Activated naive CD4-positive, alpha-beta T cell treated with anti-CD3 and anti-CD28 coated beads for 36 hours (primary cell): ENCODE measurements at regions of chr14 and their contacts with region 1.

Region 1: DNA sequence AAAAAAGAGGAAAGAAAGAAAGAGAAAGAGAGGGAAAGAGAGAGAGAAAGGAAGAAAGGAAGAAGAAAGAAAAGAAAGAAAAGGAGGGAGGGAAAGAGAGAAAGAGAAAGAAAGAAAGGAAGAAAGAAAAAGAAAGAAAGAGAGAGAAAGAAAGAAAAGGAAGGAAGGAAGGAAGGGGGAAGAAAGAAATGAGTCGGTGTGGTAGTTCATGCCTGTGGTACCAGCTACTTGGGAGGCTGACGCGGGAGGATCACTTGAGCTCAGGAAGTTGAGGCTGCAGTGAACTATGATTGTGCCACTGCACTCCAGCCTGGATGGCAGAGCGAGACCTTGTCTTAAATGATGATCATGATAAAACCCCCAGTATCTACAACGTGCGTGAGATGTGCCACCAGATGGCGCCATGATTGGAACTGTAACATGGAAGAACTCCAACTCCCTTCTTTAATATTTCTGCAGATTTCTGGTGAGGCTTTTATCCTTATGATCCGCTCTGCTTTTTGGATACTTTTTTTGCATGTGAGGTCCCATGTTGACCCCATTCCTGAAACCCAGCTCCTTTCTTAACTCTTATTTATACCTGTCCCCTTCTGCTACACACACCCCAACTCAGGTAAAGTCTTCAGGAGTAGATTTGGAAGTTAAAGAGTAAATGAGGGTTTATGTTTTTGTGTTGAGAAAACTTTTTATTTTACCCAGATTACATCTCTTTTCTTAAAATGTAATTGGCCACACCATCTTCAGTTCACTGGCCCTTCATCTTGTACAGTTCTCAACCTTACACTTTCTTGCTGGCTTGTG is 25.6 kb downstream of the RNASE10 start:
- DNase-seq: peak; percentile 85
- H3K4me3 Mint-ChIP-seq: peak overlapping the region; percentile 59
- H3K27ac Mint-ChIP-seq: no peak overlapping the region
- H3K4me1 Mint-ChIP-seq: peaks cover 11% of the 10 kb centered on the region
- H3K27me3 Mint-ChIP-seq: no peaks in the 10 kb centered on the region

Region 2: DNA sequence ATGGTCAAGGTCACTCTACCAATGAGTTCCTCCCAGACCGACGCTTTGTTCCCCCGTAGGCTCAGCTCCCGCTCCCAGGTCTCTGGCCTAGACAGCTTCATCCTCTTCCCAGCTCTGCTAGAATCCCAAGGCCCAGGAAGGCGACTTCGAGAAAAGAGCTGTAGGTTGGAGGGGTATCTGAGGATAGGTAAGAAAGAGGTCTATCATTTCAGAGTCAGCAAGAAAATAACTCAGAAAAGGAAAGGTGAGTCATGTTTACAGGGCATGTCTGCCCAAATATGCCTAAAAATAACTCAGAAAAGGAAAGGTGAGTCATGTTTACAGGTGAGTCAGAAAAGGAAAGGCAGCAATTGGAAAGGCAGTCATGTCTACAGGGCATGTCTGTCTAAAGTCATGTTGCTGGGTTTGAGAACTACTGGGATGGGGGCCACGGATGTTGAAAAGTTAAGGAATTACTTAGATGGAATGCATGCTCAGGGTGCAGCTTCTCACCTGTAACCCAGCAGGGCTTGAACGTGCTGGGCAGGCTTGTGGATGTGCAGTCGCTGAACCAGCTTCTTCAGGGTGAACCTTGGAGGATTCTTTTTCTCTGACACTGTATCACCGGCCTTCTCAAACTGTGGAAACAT is 129.9 kb before region 1 on chr14:
- CTCF ChIA-PET with region 1: no interaction called
- intact Hi-C with region 1: no loop called
- DNase-seq: peak; percentile 43
- H3K4me3 Mint-ChIP-seq: peak overlapping the region; percentile 56
- H3K27ac Mint-ChIP-seq: peak overlapping the region; percentile 98
- H3K4me1 Mint-ChIP-seq: peaks cover 28% of the 10 kb centered on the region
- H3K27me3 Mint-ChIP-seq: no peaks in the 10 kb centered on the region

Region 3: GRCh38 chr14:20690848-20691523 is 160.0 kb after region 1 on chr14:
- CTCF ChIA-PET with region 1: interaction called, 3 read pairs
- intact Hi-C with region 1: loop called (anchors 1 kb)
- DNase-seq: peak; percentile 60
- H3K4me3 Mint-ChIP-seq: no peak overlapping the region
- H3K27ac Mint-ChIP-seq: no peak overlapping the region
- H3K4me1 Mint-ChIP-seq: peaks cover 3% of the 10 kb centered on the region
- H3K27me3 Mint-ChIP-seq: no peaks in the 10 kb centered on the region